ENCODE measurements at regions of chr11 and their contacts with region 1.

Region 1: GRCh38 chr11:71251761-71252443 is 475 bp downstream of the SHANK2 start:
- DNase-seq: peak; percentile 37 to 80
- ATAC-seq: peak; percentile 49 to 64
- H3K4me3 ChIP-seq: peak overlapping the region; percentile 99
- H3K27ac ChIP-seq: peak overlapping the region; percentile 99
- H3K4me1 ChIP-seq: peaks cover 32% of the 10 kb centered on the region
- CTCF ChIP-seq: peak; percentile 79
- EP300 ChIP-seq: no peak
- POLR2A ChIP-seq: no peak
- RAD21 ChIP-seq: peak; percentile 45 to 73; a peak in 4 of 5 replicates

Region 2: DNA sequence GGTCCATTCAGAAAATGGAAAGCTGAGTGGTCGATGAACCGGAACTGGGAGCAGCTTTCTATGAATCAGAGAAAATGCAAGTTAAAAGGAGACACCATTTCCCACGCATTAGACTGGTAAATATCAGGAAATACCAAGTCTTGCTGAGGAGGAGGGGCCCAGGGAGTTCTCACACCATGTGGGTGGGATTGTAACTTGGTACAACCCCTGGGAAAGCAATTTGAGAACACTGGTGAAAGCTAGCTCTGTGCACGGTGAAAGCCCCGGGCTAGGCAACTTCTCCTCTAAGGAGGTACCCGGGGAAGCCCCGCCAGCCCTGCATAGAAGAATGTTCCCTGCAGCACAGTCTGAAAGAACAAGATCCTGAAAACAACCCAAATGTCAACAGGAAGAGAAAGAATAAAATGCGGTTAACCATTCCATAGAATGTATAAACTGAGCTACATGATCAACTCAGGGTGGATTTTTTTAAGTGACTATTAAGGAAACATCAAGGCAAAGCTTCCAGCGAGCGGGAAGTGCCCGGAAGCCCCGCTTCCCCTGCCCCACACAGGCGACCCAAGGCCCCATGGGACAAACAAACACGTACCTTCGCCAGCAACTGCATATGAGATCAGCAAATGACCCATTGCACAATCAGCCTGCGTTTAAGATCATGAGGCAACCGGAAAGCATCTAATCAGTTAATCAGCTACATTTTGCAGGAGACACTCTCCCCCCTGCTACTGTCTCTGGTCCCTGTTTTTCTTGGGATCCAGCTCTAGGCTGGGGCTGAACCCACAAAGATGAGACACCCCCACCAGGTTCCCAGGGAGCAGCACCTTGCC is 10.8 kb before region 1 on chr11:
- CTCF ChIA-PET with region 1: interaction called, 77 read pairs
- POLR2A ChIA-PET with region 1: interaction called, 15 read pairs
- DNase-seq: peak; percentile 38 to 85
- ATAC-seq: peak; percentile 82 to 85
- H3K4me3 ChIP-seq: peak overlapping the region; percentile 1; the same call in 1 of the 3 replicates
- H3K27ac ChIP-seq: peak overlapping the region; percentile 74 to 80
- H3K4me1 ChIP-seq: peaks cover 28% of the 10 kb centered on the region
- CTCF ChIP-seq: no peak
- EP300 ChIP-seq: peak; percentile 72 to 80; a peak in 3 of 5 replicates
- POLR2A ChIP-seq: no peak
- RAD21 ChIP-seq: no peak; a peak in 1 of 5 replicates

Region 3: DNA sequence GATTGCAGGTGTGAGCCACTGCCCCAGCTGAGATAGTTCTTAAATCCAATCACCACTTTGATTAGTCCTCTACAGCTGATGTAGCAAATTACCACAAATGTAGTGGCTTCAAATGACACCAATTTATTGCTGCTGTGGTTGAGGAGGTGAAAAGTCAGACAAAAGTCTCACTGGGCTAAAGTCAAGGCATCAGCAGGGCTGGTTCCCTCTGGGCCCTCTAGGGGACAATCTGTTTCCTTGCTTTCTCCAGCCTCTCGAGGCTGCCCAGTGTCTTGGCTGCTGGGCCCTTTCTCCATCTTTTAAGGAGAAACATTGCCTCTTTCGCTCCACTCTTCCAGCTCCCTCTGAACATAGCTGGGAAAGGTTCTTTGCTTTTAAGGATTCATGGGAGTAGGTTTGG is 51.0 kb after region 1 on chr11:
- CTCF ChIA-PET with region 1: interaction called, 12 read pairs
- POLR2A ChIA-PET with region 1: interaction called, 29 read pairs
- DNase-seq: peak in 1 of 2 experiments; percentile 24
- ATAC-seq: peak in 1 of 2 experiments; percentile 16; a peak in 1 of 6 replicates
- H3K4me3 ChIP-seq: no peak overlapping the region
- H3K27ac ChIP-seq: peak overlapping the region; percentile 77 to 91; a peak in 4 of 6 replicates
- H3K4me1 ChIP-seq: peaks cover 51% of the 10 kb centered on the region
- CTCF ChIP-seq: no peak
- EP300 ChIP-seq: no peak
- POLR2A ChIP-seq: no peak
- RAD21 ChIP-seq: peak in 1 of 2 experiments; percentile 30; a peak in 1 of 5 replicates

Region 4: GRCh38 chr11:71336176-71336995 is 84.5 kb after region 1 on chr11:
- CTCF ChIA-PET with region 1: interaction called, 39 read pairs
- POLR2A ChIA-PET with region 1: interaction called, 3 read pairs
- DNase-seq: peak in 1 of 2 experiments; percentile 10
- ATAC-seq: peak in 1 of 2 experiments; percentile 18; a peak in 1 of 6 replicates
- H3K4me3 ChIP-seq: no peak overlapping the region
- H3K27ac ChIP-seq: no peak overlapping the region
- H3K4me1 ChIP-seq: no peaks in the 10 kb centered on the region
- CTCF ChIP-seq: no peak
- EP300 ChIP-seq: no peak
- POLR2A ChIP-seq: no peak
- RAD21 ChIP-seq: no peak